Colonic mucosa (tissue), 4 donors: ENCODE measurements at regions of chr11 and their contacts with region 1.

Region 1: GRCh38 chr11:2428322-2428795 is 16.0 kb downstream of the TRPM5 start:
- DNase-seq: peak; percentile 88
- H3K4me3 ChIP-seq: no peak overlapping the region
- H3K27ac ChIP-seq: no peak overlapping the region
- H3K4me1 ChIP-seq: no peaks in the 10 kb centered on the region
- H3K27me3 ChIP-seq: no peaks in the 10 kb centered on the region
- CTCF ChIP-seq: peak; percentile 84

Region 2: DNA sequence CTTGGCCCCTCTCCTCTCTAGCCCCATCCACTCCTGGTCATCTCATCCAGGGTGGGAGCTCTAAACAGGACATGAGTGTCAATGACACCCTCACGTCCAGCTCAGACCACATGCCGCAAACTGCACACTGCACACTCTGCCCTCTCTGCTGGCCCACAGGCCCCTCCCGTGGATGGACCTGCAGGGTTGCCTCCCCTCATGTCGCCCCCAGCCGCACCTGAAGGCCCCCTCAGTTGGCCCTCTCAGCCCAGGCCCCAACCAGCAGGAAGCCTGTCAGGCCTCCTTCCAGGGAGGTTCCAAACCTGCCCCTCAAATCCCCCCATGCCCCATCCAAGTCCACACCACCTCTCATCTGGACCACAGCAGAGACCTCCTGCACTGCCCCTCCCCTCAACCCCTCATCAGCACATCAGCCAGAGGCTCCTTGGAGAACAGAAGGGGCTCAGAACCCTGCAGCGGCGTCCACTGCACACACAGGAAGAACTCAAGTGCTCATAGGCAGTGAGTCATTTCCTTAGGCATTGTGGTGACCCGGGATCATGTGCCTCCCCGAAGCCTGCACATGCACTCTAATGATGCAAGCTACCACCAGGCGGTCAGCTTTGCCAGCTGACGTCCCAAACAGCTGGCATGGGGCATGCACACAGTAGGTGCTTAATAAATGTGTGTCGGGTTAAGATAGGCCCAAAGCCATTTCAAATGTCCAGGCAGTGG is 470.2 kb after region 1 on chr11:
- intact Hi-C with region 1: loop called (anchors 5 kb)
- DNase-seq: peak; percentile 58
- H3K4me3 ChIP-seq: no peak overlapping the region
- H3K27ac ChIP-seq: peak overlapping the region; percentile 57
- H3K4me1 ChIP-seq: peaks cover 10% of the 10 kb centered on the region
- H3K27me3 ChIP-seq: no peaks in the 10 kb centered on the region
- CTCF ChIP-seq: no peak